Mammary epithelial cell (primary cell): ENCODE measurements at regions of chr14 and their contacts with region 1.

Region 1: DNA sequence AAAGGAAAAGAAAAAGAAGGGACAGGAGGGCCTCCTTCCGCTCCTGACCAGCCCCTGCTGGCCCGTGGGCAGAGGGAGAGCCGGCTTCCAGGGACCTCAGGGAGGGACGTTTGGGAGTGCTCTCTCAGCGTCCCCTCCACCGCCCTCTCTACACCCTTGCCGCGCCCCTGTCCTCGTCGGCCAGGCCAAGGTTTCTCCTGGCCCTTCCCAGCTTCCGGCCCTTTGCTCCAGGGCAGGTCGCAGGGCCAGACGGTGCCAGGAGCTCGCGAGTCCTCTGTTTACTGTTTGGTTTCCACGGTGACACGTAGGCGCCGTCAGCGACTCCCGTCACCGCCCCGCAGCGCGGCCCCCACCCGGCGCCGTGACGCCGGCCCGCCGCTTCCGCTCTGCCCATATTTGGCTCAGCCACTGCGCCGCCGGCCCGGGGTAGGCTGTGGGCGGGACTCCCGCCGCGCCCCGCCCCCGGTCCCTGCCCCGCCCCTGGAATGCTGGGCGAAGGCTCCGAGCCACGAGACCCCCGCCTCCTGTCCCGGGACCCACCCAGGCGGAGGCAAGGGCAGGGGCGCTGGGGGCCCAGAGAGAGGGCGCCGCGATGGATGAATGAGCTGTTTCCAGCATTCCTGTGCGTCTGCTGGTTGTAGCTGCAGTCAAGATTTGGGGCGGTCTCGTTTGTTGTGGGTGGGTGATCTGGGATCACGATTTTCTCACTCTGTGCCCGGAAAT is 15.5 kb downstream of the FOS start:
- DNase-seq: peak; percentile 95
- H3K4me3 ChIP-seq: peak overlapping the region; percentile 73 to 86 (median 80)
- H3K27ac ChIP-seq: peak overlapping the region; percentile 99
- H3K4me1 ChIP-seq: peaks cover 32% of the 10 kb centered on the region
- H3K27me3 ChIP-seq: no peaks in the 10 kb centered on the region
- CTCF ChIP-seq: peak in 1 of 2 donors; percentile 3

Region 2: DNA sequence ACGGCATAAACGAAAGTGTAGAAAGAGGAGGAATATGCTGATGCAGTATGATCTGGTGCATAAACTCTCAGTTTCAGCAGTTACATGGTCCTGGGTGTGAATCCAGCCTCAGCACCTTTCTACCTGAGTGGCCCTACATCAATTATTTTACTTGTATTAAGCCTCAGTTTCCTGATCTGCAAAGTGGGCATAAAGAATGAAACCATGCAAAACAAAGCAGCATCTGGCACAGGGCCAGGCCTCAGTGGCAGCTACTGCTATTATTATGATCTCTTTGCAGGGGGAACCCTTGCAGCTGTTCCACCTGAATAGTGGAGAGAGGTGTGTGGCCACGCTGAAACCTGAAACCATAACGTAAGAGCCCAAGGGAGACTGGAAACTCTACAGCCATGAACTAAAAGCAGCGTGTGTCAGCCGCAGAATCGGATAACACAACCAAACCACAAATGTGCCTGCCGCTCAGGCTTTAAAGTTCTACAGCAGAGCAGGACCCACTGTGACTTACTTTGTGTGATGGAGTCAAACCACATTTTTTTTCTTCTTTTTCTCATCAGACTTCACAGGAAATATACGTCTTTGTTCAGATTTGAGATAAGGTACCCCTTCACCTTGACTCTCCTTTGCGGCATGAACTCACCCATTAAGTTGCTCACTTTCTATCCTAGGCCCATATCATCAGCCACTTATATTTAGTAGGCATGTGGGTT is 44.7 kb before region 1 on chr14:
- CTCF ChIA-PET with region 1: no interaction called
- dilution Hi-C with region 1: loop called (anchors 5 kb)
- in situ Hi-C with region 1: no loop called
- intact Hi-C with region 1: no loop called
- DNase-seq: no peak
- H3K4me3 ChIP-seq: no peak overlapping the region
- H3K27ac ChIP-seq: no peak overlapping the region
- H3K4me1 ChIP-seq: peaks cover 24% of the 10 kb centered on the region
- H3K27me3 ChIP-seq: no peaks in the 10 kb centered on the region
- CTCF ChIP-seq: no peak